ENCODE measurements at regions of chr5 and their contacts with region 1.

Region 1: DNA sequence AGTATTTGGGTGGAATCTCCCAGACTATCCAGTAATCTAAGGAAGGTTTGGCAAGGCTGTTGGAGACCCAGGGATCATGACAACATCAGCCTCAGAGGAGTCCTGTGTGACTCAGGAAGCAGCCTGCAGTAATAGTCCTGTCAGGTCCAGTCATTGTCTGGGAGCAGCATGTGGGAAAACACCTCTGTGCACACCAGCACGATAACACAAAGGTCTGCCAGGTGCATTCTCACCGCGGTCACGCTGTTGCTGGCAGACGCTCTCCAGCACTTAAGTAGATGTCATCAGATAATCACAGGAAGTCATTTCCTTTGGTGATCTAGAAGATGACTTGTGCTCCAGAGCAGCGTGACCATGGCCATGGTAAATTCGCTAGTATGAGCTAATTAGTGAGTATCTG is 99.2 kb upstream of the IQGAP2 start:
- DNase-seq: peak; percentile 35 to 72
- ATAC-seq: peak; percentile 84 to 88 (median 87)
- H3K4me3 ChIP-seq: no peak overlapping the region
- H3K4me3 Mint-ChIP-seq: peak overlapping the region; percentile 32
- H3K27ac ChIP-seq: no peak overlapping the region
- H3K27ac Mint-ChIP-seq: peak overlapping the region; percentile 65 to 91
- H3K4me1 ChIP-seq: peaks cover 21% of the 10 kb centered on the region
- H3K4me1 Mint-ChIP-seq: peaks cover 35 to 37% of the 10 kb centered on the region in 2 donors
- H3K27me3 ChIP-seq: no peaks in the 10 kb centered on the region
- H3K27me3 Mint-ChIP-seq: no peaks in the 10 kb centered on the region
- CTCF ChIP-seq: no peak

Region 2: DNA sequence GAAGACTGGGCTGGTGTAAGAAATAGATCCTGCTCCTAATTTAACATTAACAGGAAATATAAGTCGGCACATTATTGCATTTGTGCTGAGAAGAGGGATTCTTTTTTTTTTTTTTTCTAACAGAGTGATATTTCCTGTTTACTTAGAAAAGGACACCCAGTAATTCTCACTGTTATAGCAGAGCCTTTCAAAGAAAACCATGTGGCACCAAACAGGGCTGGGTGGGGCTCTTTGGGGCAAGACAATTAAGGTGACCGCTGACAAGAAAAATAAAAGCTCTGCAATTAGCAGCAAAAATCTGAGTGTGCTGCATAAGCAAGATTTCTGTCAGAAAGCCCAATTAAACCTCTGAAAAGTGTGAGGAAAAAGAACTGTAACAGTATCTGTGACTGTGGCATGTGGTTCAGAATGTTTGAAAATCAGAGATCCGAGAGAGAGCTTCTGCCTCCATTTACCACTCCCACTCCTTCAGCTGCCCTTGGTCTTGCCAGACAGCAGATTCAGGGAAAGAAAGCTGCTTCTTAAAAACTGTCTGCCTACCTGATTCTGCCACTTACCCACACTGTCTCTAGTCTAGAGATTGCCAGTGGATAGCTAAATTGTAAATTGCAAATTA is 22.1 kb after region 1 on chr5:
- intact Hi-C with region 1: loop called (anchors 2 kb)
- DNase-seq: peak; percentile 47 to 66
- ATAC-seq: peak; percentile 93 to 94 (median 93)
- H3K4me3 ChIP-seq: no peak overlapping the region
- H3K4me3 Mint-ChIP-seq: peak overlapping the region; percentile 86
- H3K27ac ChIP-seq: peak overlapping the region; percentile 81
- H3K27ac Mint-ChIP-seq: peak overlapping the region; percentile 90 to 94
- H3K4me1 ChIP-seq: peaks cover 52% of the 10 kb centered on the region
- H3K4me1 Mint-ChIP-seq: peaks cover 69 to 78% of the 10 kb centered on the region in 2 donors
- H3K27me3 ChIP-seq: no peaks in the 10 kb centered on the region
- H3K27me3 Mint-ChIP-seq: no peaks in the 10 kb centered on the region
- CTCF ChIP-seq: no peak

Measured in natural killer cell (primary cell).